Motor neuron (in vitro differentiated cells): ENCODE measurements at regions of chr17 and their contacts with region 1.

Region 1: DNA sequence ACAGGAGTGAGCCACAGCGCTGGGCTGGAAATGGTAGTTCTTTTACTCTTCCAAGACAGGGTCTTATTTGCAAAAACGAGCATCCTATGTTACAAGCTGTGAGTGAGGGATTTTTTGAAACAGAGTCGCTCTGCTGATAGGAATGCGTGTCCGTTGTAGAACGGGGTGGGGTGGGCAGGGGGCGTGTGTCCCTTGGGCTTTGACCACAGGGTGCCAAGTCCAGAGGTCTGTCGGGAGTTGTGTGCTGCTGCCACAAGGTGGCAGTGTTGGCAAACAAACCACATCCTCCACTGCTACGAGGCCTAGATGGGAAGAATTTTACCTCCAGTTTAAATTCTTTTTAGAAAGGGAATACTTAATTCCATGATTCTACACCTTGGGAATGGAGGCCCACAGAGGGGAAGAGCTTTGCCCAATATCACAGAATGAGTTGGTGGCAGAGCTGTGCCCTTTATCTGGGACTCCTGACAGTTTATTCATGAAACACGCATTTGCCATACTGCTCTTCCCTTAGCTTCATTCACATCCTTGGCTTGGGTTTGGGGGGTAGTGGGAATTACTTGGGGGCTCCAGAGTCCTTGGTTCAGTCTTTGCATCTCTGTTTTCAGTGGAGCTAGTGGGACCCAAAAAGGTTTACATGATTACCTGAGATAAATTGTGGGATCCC is 30.6 kb upstream of the ETV4 start:
- ATAC-seq: peak; percentile 69 to 90 (median 78)
- H3K4me3 ChIP-seq: no peak overlapping the region
- H3K27ac ChIP-seq: no peak overlapping the region
- H3K4me1 ChIP-seq: peaks cover 39 to 40% of the 10 kb centered on the region in 2 donors

Region 2: GRCh38 chr17:43673516-43674323 is 97.0 kb after region 1 on chr17:
- in situ Hi-C with region 1: loop called in 2 of 9 experiments (anchors 5 kb)
- ATAC-seq: peak in 6 of 8 experiments; percentile 19 to 75 (median 40)
- H3K4me3 ChIP-seq: no peak overlapping the region
- H3K27ac ChIP-seq: no peak overlapping the region
- H3K4me1 ChIP-seq: peaks cover 63 to 65% of the 10 kb centered on the region in 2 donors